ENCODE measurements at regions of chr9 and their contacts with region 1.

Region 1: GRCh38 chr9:122125158-122125508 is 32.0 kb upstream of the TTLL11 start:
- DNase-seq: peak; percentile 46 to 80
- H3K4me3 ChIP-seq: no peak overlapping the region
- H3K27ac ChIP-seq: no peak overlapping the region
- H3K4me1 ChIP-seq: no peaks in the 10 kb centered on the region
- H3K27me3 ChIP-seq: no peaks in the 10 kb centered on the region
- CTCF ChIP-seq: peak; percentile 95

Region 2: GRCh38 chr9:121634329-121635261 is 490.5 kb before region 1 on chr9:
- CTCF ChIA-PET with region 1: no interaction called
- POLR2A ChIA-PET with region 1: no interaction called
- intact Hi-C with region 1: loop called (anchors 5 kb)
- DNase-seq: peak in 1 of 2 experiments; percentile 39
- H3K4me3 ChIP-seq: no peak overlapping the region
- H3K27ac ChIP-seq: no peak overlapping the region
- H3K4me1 ChIP-seq: peaks cover 9% of the 10 kb centered on the region; the same call in 1 of the 2 replicates
- H3K27me3 ChIP-seq: no peaks in the 10 kb centered on the region
- CTCF ChIP-seq: peak; percentile 60

Region 3: GRCh38 chr9:122099271-122099869 is 25.8 kb before region 1 on chr9:
- CTCF ChIA-PET with region 1: interaction called, 47 read pairs
- POLR2A ChIA-PET with region 1: no interaction called
- intact Hi-C with region 1: loop called (anchors 1 kb)
- DNase-seq: peak; percentile 47 to 73
- H3K4me3 ChIP-seq: no peak overlapping the region
- H3K27ac ChIP-seq: no peak overlapping the region
- H3K4me1 ChIP-seq: no peaks in the 10 kb centered on the region
- H3K27me3 ChIP-seq: peaks cover 21% of the 10 kb centered on the region; the same call in 1 of the 2 replicates
- CTCF ChIP-seq: peak; percentile 88

Region 4: DNA sequence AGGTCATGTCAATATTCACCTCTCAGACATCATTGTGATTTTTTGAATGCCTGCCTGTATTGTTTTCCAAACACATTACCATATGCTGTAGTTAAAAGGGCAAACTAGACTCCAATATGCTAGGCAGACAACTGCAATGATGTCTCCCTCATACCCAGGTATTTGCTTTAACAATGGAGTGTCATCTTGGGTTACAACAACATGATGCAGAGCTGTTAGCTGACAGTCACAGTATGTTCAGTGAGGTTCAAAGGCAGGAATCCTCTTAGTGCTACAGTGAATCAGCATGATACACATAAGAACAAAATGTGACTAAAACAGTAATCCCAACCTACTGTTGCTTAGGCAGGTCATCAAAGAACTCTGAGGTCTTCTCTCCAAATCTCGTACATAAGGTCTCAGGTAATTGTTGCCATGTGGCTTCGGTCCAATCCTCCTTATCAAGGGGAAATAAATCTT is 328.6 kb after region 1 on chr9:
- CTCF ChIA-PET with region 1: no interaction called
- POLR2A ChIA-PET with region 1: no interaction called
- intact Hi-C with region 1: loop called (anchors 1 kb)
- DNase-seq: no peak
- H3K4me3 ChIP-seq: no peak overlapping the region
- H3K27ac ChIP-seq: no peak overlapping the region
- H3K4me1 ChIP-seq: no peaks in the 10 kb centered on the region
- H3K27me3 ChIP-seq: peaks cover 6% of the 10 kb centered on the region; the same call in 1 of the 2 replicates
- CTCF ChIP-seq: no peak

Region 5: DNA sequence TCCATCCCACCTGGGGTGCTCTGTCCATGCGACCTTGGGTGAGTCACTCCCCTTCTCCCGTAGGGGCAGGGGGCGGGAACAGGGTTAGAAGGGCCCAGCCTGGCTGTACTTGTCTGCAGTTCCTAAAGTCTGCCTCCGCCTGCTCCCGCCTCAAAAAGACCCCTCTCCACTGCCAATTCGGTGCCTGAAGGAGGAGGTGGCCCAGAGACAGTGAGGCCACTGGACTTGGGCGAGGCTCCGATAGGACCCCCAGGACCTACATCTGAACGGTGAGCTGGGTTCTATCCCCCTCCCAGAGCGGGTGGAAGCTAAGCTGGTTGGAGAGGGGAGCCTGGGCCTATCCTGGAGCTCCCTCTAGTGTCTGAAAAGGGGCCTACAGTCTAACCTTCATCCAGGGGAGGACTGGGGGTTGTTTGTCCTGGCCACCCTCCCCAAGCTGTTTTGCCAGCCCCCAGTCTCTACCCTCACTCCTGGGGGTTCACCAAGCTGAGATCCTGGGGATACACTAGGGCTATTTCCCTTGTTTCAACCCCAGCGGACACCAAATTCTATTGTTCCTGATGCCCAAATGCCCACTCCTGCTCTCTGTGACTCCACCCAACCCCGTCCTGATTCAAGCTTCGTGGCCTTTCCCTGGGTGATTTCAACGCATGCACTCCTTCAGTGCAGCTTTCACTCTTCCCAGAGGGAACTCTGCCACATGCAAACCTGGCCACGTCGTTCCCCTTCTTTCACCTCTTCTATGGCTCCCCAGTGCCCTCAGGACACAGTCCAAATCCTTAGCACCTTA is 1224.8 kb after region 1 on chr9:
- CTCF ChIA-PET with region 1: no interaction called
- POLR2A ChIA-PET with region 1: no interaction called
- intact Hi-C with region 1: loop called (anchors 5 kb)
- DNase-seq: peak in 1 of 2 experiments; percentile 62
- H3K4me3 ChIP-seq: no peak overlapping the region
- H3K27ac ChIP-seq: no peak overlapping the region
- H3K4me1 ChIP-seq: no peaks in the 10 kb centered on the region
- H3K27me3 ChIP-seq: peaks cover 25% of the 10 kb centered on the region; the same call in 1 of the 2 replicates
- CTCF ChIP-seq: peak; percentile 96